BJ (cell line): ENCODE measurements at regions of chr16 and their contacts with region 1.

Region 1: GRCh38 chr16:46929378-46930332 is 43.8 kb downstream of the DNAJA2 start:
- DNase-seq: no peak
- H3K4me3 ChIP-seq: no peak overlapping the region
- H3K27me3 ChIP-seq: no peaks in the 10 kb centered on the region
- CTCF ChIP-seq: peak; percentile 92

Region 2: GRCh38 chr16:46908540-46909372 is 20.9 kb before region 1 on chr16:
- CTCF ChIA-PET with region 1: interaction called, 20 read pairs
- POLR2A ChIA-PET with region 1: no interaction called
- DNase-seq: no peak
- H3K4me3 ChIP-seq: no peak overlapping the region
- H3K27me3 ChIP-seq: no peaks in the 10 kb centered on the region
- CTCF ChIP-seq: peak; percentile 75

Region 3: GRCh38 chr16:46918861-46919792 is 10.5 kb before region 1 on chr16:
- CTCF ChIA-PET with region 1: interaction called, 20 read pairs
- POLR2A ChIA-PET with region 1: no interaction called
- DNase-seq: no peak
- H3K4me3 ChIP-seq: no peak overlapping the region
- H3K27me3 ChIP-seq: no peaks in the 10 kb centered on the region
- CTCF ChIP-seq: no peak

Region 4: DNA sequence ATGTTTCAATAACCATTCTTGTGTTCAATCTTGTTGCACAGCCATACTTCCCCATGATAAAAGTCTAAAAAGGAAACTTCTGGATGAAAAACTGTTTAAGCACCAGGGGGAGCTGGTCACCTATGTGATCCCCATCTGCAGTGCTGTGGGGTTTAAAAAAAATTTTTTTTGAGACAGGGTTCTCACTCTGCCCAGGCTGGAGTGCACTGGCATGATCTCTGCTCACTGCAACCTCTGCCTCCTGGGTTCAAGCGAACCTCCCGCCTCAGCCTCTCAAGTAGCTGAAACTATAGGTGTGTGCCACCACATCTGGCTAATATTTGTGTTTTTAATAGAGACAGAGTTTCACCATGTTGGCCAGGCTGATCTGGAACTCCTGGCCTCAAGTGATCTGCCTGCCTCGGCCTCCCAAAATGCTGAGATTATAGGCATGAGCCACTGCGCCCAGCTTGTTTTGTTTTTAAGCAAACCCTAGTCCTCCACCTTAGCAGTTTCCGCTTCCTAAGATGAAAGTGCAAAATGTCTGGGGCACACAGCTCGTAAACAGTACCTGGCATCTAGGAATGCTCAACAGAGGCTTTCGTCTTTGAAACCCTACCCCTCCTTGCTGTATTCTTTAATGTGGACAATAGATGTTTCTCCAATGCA is 18.4 kb after region 1 on chr16:
- CTCF ChIA-PET with region 1: interaction called, 10 read pairs
- POLR2A ChIA-PET with region 1: no interaction called
- DNase-seq: no peak
- H3K4me3 ChIP-seq: no peak overlapping the region
- H3K27me3 ChIP-seq: no peaks in the 10 kb centered on the region
- CTCF ChIP-seq: peak; percentile 60

Region 5: GRCh38 chr16:46982335-46982734 is 52.7 kb after region 1 on chr16:
- CTCF ChIA-PET with region 1: no interaction called
- POLR2A ChIA-PET with region 1: no interaction called
- DNase-seq: no peak
- H3K4me3 ChIP-seq: no peak overlapping the region
- H3K27me3 ChIP-seq: peaks cover 2% of the 10 kb centered on the region; the same call in 1 of the 2 replicates
- CTCF ChIP-seq: no peak